Activated T-helper 1 cell treated with anti-CD3 and anti-CD28 coated beads, Interleukin-12 subunit alpha, Interleukin-12 subunit beta, Interleukin-2, Interleukin-4 antibody, amounts not matched to agents 30 ng/mL and 10 ng/mL and 1 ng/mL, durations not matched to agents 14 hours and 24 hours and 36 hours (primary cell): ENCODE measurements at regions of chr5 and their contacts with region 1.

Region 1: GRCh38 chr5:126449751-126450271 is 26.6 kb downstream of the GRAMD2B start:
- DNase-seq: peak; percentile 60
- H3K4me3 Mint-ChIP-seq: peak overlapping the region; percentile 85
- H3K27ac Mint-ChIP-seq: peak overlapping the region; percentile 100
- H3K4me1 Mint-ChIP-seq: peaks cover 67% of the 10 kb centered on the region
- H3K27me3 Mint-ChIP-seq: no peaks in the 10 kb centered on the region

Region 2: GRCh38 chr5:126403876-126404275 is 45.9 kb before region 1 on chr5:
- intact Hi-C with region 1: no loop called
- DNase-seq: no peak
- H3K4me3 Mint-ChIP-seq: no peak overlapping the region
- H3K27ac Mint-ChIP-seq: no peak overlapping the region
- H3K4me1 Mint-ChIP-seq: no peaks in the 10 kb centered on the region
- H3K27me3 Mint-ChIP-seq: peaks cover 7% of the 10 kb centered on the region

Region 3: GRCh38 chr5:126422989-126423788 is 26.6 kb before region 1 on chr5 and contains the start of gene GRAMD2B:
- intact Hi-C with region 1: loop called (anchors 1 kb)
- DNase-seq: peak; percentile 53
- H3K4me3 Mint-ChIP-seq: peak within 1 kb of the TSS; percentile 86
- H3K27ac Mint-ChIP-seq: peak within 1 kb of the TSS; percentile 81
- H3K4me1 Mint-ChIP-seq: peaks cover 40% of the 10 kb centered on the region
- H3K27me3 Mint-ChIP-seq: no peaks in the 10 kb centered on the region
- total RNA-seq, gene GRAMD2B: 8.3 and 9.5 TPM in 2 replicates

Region 4: DNA sequence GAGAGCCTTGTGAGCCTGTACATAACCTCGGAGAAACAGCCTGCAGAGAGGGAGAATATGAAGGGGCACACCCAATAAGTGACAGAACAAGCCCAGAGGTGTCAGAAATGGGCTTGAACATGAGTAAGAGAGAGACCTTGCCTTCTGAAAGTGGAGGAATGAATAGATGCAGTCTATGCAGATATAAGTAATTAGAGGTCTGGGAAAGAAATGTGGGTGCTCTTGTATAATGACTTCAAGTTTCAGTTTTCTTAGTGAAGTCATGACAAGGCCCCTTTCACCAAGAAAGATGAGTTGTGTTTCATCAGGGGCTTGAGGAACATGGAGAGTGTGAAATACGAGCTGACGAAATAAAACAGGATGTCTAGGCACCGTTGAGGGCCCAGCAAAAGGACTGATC is 11.5 kb before region 1 on chr5:
- intact Hi-C with region 1: loop called (anchors 1 kb)
- DNase-seq: no peak
- H3K4me3 Mint-ChIP-seq: no peak overlapping the region
- H3K27ac Mint-ChIP-seq: peak overlapping the region; percentile 9
- H3K4me1 Mint-ChIP-seq: peaks cover 22% of the 10 kb centered on the region
- H3K27me3 Mint-ChIP-seq: no peaks in the 10 kb centered on the region

Region 5: GRCh38 chr5:126508962-126509279 is 59.1 kb after region 1 on chr5:
- intact Hi-C with region 1: loop called (anchors 2 kb)
- DNase-seq: no peak
- H3K4me3 Mint-ChIP-seq: peak overlapping the region; percentile 17
- H3K27ac Mint-ChIP-seq: peak overlapping the region; percentile 61
- H3K4me1 Mint-ChIP-seq: peaks cover 10% of the 10 kb centered on the region
- H3K27me3 Mint-ChIP-seq: no peaks in the 10 kb centered on the region

Region 6: GRCh38 chr5:126745259-126745992 is 295.6 kb after region 1 on chr5:
- intact Hi-C with region 1: loop called (anchors 5 kb)
- DNase-seq: no peak
- H3K4me3 Mint-ChIP-seq: no peak overlapping the region
- H3K27ac Mint-ChIP-seq: peak overlapping the region; percentile 40
- H3K4me1 Mint-ChIP-seq: peaks cover 60% of the 10 kb centered on the region
- H3K27me3 Mint-ChIP-seq: peaks cover 1% of the 10 kb centered on the region

Region 7: GRCh38 chr5:126763371-126763770 is 313.6 kb after region 1 on chr5:
- intact Hi-C with region 1: loop called (anchors 5 kb)
- DNase-seq: no peak
- H3K4me3 Mint-ChIP-seq: no peak overlapping the region
- H3K27ac Mint-ChIP-seq: peak overlapping the region; percentile 70
- H3K4me1 Mint-ChIP-seq: peaks cover 37% of the 10 kb centered on the region
- H3K27me3 Mint-ChIP-seq: no peaks in the 10 kb centered on the region

Region 8: DNA sequence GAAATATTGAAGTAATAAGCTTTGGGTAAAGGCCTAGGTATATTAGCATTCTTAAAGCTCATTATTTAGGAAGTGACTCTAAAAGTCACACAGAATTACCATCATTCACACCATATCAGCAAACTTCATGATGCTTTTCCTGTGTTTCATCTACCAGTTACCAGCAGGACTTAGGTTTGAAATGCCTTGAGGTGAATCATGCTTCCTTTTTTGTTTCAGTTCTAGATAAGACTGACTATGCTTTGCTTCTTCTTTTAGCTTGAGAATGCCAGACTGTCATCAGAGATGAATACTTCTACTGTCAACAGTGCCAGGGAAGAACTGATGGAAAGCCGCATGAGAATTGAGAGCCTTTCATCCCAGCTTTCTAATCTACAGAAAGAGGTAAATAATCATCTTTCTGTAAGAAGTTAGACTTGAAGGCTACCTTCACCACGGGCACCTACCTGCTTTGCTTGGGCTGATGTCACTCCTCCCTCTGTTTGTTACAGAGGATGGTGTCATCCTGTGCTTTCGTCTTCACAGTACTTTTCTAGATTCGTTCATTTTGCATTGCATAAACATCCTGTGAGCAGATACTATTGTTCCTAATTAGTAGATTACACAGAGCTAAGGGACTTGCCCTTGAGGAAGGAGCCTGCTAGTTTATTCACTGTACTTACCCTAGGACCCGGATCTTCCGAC is 361.8 kb after region 1 on chr5:
- intact Hi-C with region 1: loop called (anchors 5 kb)
- DNase-seq: peak; percentile 50
- H3K4me3 Mint-ChIP-seq: peak overlapping the region; percentile 81
- H3K27ac Mint-ChIP-seq: peak overlapping the region; percentile 90
- H3K4me1 Mint-ChIP-seq: peaks cover 69% of the 10 kb centered on the region
- H3K27me3 Mint-ChIP-seq: no peaks in the 10 kb centered on the region